Naive thymus-derived CD4-positive, alpha-beta T cell (primary cell): ENCODE measurements at regions of chr3 and their contacts with region 1.

Region 1: DNA sequence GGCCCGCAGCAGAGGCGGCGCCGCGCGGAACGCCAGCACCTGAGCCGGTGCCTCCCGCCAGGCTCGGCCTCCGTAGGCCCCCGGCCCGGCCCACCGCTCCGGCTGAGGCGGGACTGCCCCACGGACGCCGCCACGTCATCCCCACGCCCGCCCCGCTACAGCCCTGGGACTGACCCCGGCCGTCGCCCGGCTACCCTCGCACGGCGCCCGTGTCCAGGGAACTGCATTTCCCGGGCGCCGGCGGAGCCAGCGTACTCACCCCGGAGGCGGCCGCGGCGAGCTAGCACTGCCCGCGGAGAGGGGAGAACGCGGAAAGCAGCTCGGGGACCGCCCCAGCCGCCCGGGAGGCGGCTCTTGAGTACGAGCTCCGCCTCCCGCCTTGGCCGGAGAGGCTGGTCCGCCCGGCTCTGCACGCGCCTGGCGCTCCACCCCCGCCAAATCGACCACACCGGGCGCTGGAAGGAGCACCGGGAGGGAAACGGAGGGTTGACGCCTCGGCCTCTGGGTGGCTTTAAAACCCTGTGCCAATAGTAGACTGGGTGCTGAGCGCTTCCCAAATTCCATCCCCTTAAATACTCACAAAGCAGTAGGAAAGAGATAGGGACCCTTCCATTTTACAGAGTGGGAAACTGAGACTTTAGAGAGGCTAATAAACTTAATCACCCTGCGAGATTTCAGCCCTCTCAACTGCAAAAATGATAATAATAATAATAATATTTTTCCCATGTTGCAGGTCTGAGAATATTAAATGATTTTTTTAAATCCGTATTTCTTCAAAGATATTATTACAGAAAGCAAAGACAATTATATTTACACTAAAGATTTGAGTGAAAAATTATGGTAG is at the start of gene B4GALT4:
- DNase-seq: peak; percentile 59 to 79 (median 63)
- ATAC-seq: peak; percentile 78
- H3K4me3 ChIP-seq: peak within 1 kb of the TSS; percentile 71
- H3K4me3 Mint-ChIP-seq: peak within 1 kb of the TSS; percentile 90 to 99 (median 94)
- H3K27ac ChIP-seq: peak within 1 kb of the TSS; percentile 90
- H3K27ac Mint-ChIP-seq: peak within 1 kb of the TSS; percentile 83 to 96 (median 91)
- H3K4me1 ChIP-seq: peaks cover 23 to 27% of the 10 kb centered on the region in 2 donors
- H3K4me1 Mint-ChIP-seq: peaks cover 24 to 45% (median 36%) of the 10 kb centered on the region in 7 donors
- H3K27me3 ChIP-seq: no peaks in the 10 kb centered on the region
- H3K27me3 Mint-ChIP-seq: no peaks in the 10 kb centered on the region
- total RNA-seq, gene B4GALT4: 18.0 to 39.8 (median 31.9) TPM

Region 2: GRCh38 chr3:118943597-118943996 is 297.2 kb before region 1 on chr3:
- CTCF ChIA-PET with region 1: no interaction called
- POLR2A ChIA-PET with region 1: no interaction called
- intact Hi-C with region 1: loop called (anchors 2 to 10 kb)
- DNase-seq: no peak
- ATAC-seq: no peak
- H3K4me3 ChIP-seq: no peak overlapping the region
- H3K4me3 Mint-ChIP-seq: no peak overlapping the region
- H3K27ac ChIP-seq: no peak overlapping the region
- H3K27ac Mint-ChIP-seq: peak overlapping the region in 1 of 9 donors; percentile 26
- H3K4me1 ChIP-seq: peaks cover 0 to 28% of the 10 kb centered on the region in 2 donors
- H3K4me1 Mint-ChIP-seq: peaks cover 24 to 72% (median 66%) of the 10 kb centered on the region in 7 donors
- H3K27me3 ChIP-seq: no peaks in the 10 kb centered on the region
- H3K27me3 Mint-ChIP-seq: peaks cover 0 to 9% (median 0%) of the 10 kb centered on the region in 5 donors

Region 3: DNA sequence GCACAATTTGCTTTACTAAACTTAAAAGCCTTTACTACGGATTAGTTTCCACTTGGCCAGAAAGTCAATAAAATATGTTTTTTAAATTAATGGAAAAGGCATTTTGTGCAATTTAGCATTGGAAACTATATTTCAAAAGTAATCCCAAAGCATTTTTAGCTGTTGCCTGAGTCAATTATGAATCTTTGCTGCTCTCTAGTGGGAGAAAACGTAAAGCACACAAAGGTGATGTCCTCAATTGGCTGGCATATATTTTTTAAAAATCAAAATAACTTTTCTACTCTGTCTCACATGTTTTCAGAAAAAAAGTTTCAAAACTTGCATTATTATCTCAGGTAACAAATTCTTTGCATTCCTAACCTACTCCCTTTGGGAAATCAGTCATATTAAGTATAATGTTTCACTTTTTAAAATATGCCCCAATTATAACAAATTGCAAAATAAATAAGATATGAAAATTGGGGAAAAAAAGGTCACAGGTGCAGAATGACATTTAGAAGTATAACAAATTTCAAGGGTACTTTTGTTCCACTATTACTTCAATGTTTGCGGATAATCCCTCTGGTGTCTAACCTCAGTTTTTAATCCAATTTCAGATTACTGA is 142.1 kb before region 1 on chr3:
- CTCF ChIA-PET with region 1: interaction called, 6 read pairs
- POLR2A ChIA-PET with region 1: interaction called, 3 read pairs
- intact Hi-C with region 1: loop called (anchors 1 to 2 kb)
- DNase-seq: peak in 7 of 9 donors; percentile 24 to 65 (median 54)
- ATAC-seq: peak; percentile 50
- H3K4me3 ChIP-seq: no peak overlapping the region
- H3K4me3 Mint-ChIP-seq: no peak overlapping the region
- H3K27ac ChIP-seq: no peak overlapping the region
- H3K27ac Mint-ChIP-seq: no peak overlapping the region
- H3K4me1 ChIP-seq: no peaks in the 10 kb centered on the region
- H3K4me1 Mint-ChIP-seq: peaks cover 0 to 1% (median 0%) of the 10 kb centered on the region in 7 donors
- H3K27me3 ChIP-seq: no peaks in the 10 kb centered on the region
- H3K27me3 Mint-ChIP-seq: peaks cover 0 to 4% (median 0%) of the 10 kb centered on the region in 5 donors

Region 4: DNA sequence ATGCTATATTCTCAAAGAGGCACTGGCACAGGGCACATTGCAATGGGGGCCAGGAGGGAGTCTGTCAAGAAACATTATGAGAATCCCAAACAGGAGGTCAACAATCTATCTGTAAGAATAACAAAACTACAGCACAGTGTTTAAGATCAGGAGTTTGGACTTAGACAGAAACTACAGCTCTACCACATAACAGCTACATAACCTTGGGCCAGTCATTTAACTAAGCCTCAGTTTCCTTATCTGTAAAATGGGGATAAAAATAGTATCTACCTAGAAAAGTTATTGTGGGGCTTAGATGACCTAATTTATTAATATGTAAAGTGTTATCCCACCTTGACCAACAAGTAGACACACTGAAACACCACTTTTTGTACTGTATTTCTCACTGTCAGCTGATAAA is 10.1 kb before region 1 on chr3:
- CTCF ChIA-PET with region 1: interaction called, 6 read pairs
- POLR2A ChIA-PET with region 1: interaction called, 3 read pairs
- intact Hi-C with region 1: loop called in 1 of 2 experiments (anchors 1 kb)
- DNase-seq: no peak
- ATAC-seq: no peak
- H3K4me3 ChIP-seq: no peak overlapping the region
- H3K4me3 Mint-ChIP-seq: peak overlapping the region in 2 of 10 donors; percentile 7 to 24
- H3K27ac ChIP-seq: no peak overlapping the region
- H3K27ac Mint-ChIP-seq: peak overlapping the region in 3 of 9 donors; percentile 10 to 98 (median 13)
- H3K4me1 ChIP-seq: peaks cover 0 to 48% of the 10 kb centered on the region in 2 donors
- H3K4me1 Mint-ChIP-seq: peaks cover 30 to 95% (median 89%) of the 10 kb centered on the region in 7 donors
- H3K27me3 ChIP-seq: no peaks in the 10 kb centered on the region
- H3K27me3 Mint-ChIP-seq: no peaks in the 10 kb centered on the region

Region 5: GRCh38 chr3:119314821-119315220 is 74.0 kb after region 1 on chr3:
- CTCF ChIA-PET with region 1: no interaction called
- POLR2A ChIA-PET with region 1: no interaction called
- intact Hi-C with region 1: no loop called
- DNase-seq: no peak
- ATAC-seq: no peak
- H3K4me3 ChIP-seq: no peak overlapping the region
- H3K4me3 Mint-ChIP-seq: no peak overlapping the region
- H3K27ac ChIP-seq: no peak overlapping the region
- H3K27ac Mint-ChIP-seq: no peak overlapping the region
- H3K4me1 ChIP-seq: no peaks in the 10 kb centered on the region
- H3K4me1 Mint-ChIP-seq: peaks cover 0 to 15% (median 5%) of the 10 kb centered on the region in 7 donors
- H3K27me3 ChIP-seq: no peaks in the 10 kb centered on the region
- H3K27me3 Mint-ChIP-seq: peaks cover 0 to 46% (median 0%) of the 10 kb centered on the region in 5 donors

Region 6: GRCh38 chr3:119463171-119464169 is 222.7 kb after region 1 on chr3 and contains the start of gene TMEM39A:
- CTCF ChIA-PET with region 1: interaction called, 4 read pairs
- POLR2A ChIA-PET with region 1: interaction called, 11 read pairs
- intact Hi-C with region 1: loop called (anchors 1 to 2 kb)
- DNase-seq: peak; percentile 97 to 99 (median 98)
- ATAC-seq: peak; percentile 91
- H3K4me3 ChIP-seq: peak within 1 kb of the TSS; percentile 93
- H3K4me3 Mint-ChIP-seq: peak within 1 kb of the TSS; percentile 82 to 96 (median 93)
- H3K27ac ChIP-seq: peak within 1 kb of the TSS; percentile 86
- H3K27ac Mint-ChIP-seq: peak within 1 kb of the TSS; percentile 97 to 100 (median 99)
- H3K4me1 ChIP-seq: peaks cover 16 to 26% of the 10 kb centered on the region in 2 donors
- H3K4me1 Mint-ChIP-seq: peaks cover 22 to 56% (median 45%) of the 10 kb centered on the region in 7 donors
- H3K27me3 ChIP-seq: no peaks in the 10 kb centered on the region
- H3K27me3 Mint-ChIP-seq: peaks cover 0 to 4% (median 0%) of the 10 kb centered on the region in 5 donors
- total RNA-seq, gene TMEM39A: 34.9 to 59.5 (median 49.7) TPM

Region 7: DNA sequence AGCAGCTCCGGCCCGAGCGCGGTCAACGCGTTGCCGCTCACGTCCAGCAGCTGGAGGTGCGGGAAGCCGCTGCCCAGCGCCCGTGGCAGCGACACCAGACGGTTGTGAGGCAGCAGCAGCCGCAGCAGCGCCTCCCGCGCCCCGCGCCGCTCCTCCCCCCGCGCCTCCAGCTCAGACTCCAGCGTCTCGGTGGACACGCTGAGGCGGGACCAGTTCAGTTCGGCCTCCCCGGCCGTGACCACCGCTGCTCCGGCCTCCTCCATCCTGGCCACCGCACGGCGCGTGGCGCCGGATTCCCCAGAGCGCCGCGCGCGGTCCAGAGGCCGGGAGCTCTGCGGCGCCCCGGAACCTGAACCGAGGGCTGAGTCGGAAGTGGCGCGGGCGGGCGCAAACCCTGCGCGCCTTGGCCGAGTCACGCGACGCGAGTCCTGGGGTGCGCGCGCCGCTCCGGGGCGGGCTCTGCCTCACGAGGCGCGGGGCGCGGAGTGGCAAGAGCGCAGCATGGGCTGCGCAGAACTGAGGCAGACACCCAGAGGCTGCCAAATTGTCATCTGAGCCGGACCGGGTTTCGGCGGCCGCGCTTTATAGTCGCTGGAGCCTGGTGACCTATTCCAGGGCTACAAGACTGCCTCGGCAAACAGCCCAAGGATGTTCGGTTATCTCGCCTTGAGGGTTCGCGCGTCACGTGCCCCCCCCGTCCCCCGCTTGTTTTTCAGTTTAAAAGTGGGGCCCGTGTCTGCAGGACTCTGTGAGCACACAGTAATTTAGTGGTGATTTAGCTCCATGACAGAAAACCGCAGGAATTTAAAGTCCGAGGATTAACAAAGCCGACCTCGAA is 1108.4 kb after region 1 on chr3 and contains the start of gene LRRC58:
- CTCF ChIA-PET with region 1: no interaction called
- POLR2A ChIA-PET with region 1: no interaction called
- intact Hi-C with region 1: loop called in 1 of 2 experiments (anchors 10 kb)
- DNase-seq: peak; percentile 85 to 95 (median 94)
- ATAC-seq: peak; percentile 95
- H3K4me3 ChIP-seq: peak within 1 kb of the TSS; percentile 91
- H3K4me3 Mint-ChIP-seq: peak within 1 kb of the TSS; percentile 85 to 96 (median 94)
- H3K27ac ChIP-seq: peak within 1 kb of the TSS; percentile 76
- H3K27ac Mint-ChIP-seq: peak within 1 kb of the TSS; percentile 87 to 97 (median 93)
- H3K4me1 ChIP-seq: peaks cover 20 to 26% of the 10 kb centered on the region in 2 donors
- H3K4me1 Mint-ChIP-seq: peaks cover 39 to 54% (median 48%) of the 10 kb centered on the region in 7 donors
- H3K27me3 ChIP-seq: no peaks in the 10 kb centered on the region
- H3K27me3 Mint-ChIP-seq: peaks cover 0 to 29% (median 0%) of the 10 kb centered on the region in 5 donors
- total RNA-seq, gene LRRC58: 12.3 to 24.1 (median 20.8) TPM